Heart left ventricle (tissue), 16 donors: ENCODE measurements at regions of chr5 and their contacts with region 1.

Region 1: GRCh38 chr5:74167206-74167929 is 473.2 kb downstream of the ENC1 start:
- DNase-seq: no peak
- ATAC-seq: peak in 1 of 4 donors; percentile 66
- H3K4me3 ChIP-seq: no peak overlapping the region
- H3K27ac ChIP-seq: peak overlapping the region in 2 of 12 donors; percentile 26 to 27
- H3K4me1 ChIP-seq: peaks cover 0 to 32% (median 18%) of the 10 kb centered on the region in 12 donors
- H3K27me3 ChIP-seq: no peaks in the 10 kb centered on the region
- CTCF ChIP-seq: no peak
- POLR2A ChIP-seq: no peak

Region 2: DNA sequence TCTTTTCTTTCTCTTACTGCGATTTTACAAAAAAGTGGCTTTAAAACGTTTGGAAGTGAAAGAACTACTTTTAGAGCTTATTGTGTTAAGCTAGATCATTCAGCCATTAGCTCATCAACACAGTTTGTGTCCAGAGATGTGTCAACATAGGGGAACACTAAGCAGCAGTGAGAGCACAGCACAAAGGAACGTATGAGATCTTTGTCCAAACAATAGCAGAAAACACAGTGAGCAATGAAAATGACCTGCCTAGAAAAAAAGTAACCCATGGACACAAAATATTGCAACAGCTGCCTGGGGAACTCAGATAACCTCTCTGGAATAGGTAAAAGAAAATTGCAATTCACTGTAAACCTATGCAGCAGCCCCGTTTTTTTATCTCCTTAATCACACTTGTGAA is 168.9 kb before region 1 on chr5:
- intact Hi-C with region 1: no loop called
- DNase-seq: no peak
- ATAC-seq: peak in 1 of 4 donors; percentile 31
- H3K4me3 ChIP-seq: no peak overlapping the region
- H3K27ac ChIP-seq: no peak overlapping the region
- H3K4me1 ChIP-seq: peaks cover 0 to 3% (median 0%) of the 10 kb centered on the region in 12 donors
- H3K27me3 ChIP-seq: no peaks in the 10 kb centered on the region
- CTCF ChIP-seq: no peak
- POLR2A ChIP-seq: no peak

Region 3: DNA sequence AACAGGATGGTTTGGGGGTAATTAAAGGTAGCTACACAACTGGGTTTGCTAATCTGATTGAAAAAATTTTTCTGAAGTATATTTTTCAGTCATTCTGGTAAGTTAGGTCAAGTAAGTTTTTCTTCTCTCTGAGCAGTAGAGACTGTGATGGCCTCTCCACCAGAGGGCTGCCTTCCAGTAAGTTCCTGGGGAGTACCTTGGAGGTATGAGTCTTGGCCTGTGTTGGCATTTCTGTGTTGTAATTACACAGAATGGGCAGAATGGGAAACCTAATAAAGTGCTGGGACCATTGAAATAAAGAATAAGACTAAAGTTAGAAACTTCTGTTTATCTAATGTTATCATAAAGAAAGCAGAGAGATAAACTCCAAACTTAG is 110.6 kb before region 1 on chr5:
- intact Hi-C with region 1: loop called in 1 of 10 experiments (anchors 10 kb)
- DNase-seq: no peak
- ATAC-seq: peak in 3 of 4 donors; percentile 44 to 66 (median 49)
- H3K4me3 ChIP-seq: no peak overlapping the region
- H3K27ac ChIP-seq: peak overlapping the region in 4 of 12 donors; percentile 21 to 54 (median 44)
- H3K4me1 ChIP-seq: peaks cover 0 to 16% (median 0%) of the 10 kb centered on the region in 12 donors
- H3K27me3 ChIP-seq: no peaks in the 10 kb centered on the region
- CTCF ChIP-seq: peak in 10 of 12 donors; percentile 10 to 57 (median 35)
- POLR2A ChIP-seq: no peak

Region 4: DNA sequence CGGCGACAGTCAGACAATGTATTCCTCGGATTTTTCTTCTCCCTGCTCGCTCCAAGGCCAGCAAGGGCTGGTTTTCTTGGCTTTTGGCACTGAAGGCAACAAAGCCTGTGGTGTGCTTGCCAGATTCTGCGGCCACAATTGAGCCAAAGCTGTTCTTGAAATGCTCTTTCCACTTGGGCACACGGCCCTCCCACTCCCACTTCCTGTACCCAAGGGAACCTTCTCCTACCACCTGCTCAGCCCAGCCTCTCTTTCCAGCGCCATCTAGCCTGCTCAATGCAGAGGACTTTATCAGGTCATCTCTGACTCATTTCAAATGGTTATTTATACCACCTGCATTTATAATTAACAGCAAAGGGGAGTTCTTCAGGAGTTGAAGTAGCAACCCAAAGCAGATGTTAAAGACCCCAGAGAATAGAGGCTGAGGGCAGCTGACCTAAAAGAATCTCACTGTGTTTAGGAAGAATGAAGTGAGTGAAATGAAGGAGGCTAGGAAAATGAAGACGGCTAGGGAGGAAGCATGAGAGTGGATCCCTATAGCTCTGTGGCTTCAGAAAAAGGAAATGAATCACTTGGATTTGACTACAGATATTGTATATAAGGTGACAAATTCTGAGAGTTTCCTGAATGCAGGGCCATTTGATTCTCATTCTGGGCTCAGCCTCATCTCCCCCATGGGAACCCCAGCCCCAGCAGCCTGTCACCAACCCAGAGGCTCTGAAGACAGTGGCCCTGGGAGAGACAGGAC is 34.1 kb after region 1 on chr5:
- intact Hi-C with region 1: no loop called
- DNase-seq: peak; percentile 42 to 75 (median 58)
- ATAC-seq: peak; percentile 47 to 82 (median 74)
- H3K4me3 ChIP-seq: no peak overlapping the region
- H3K27ac ChIP-seq: peak overlapping the region in 3 of 12 donors; percentile 6 to 13 (median 8)
- H3K4me1 ChIP-seq: peaks cover 0 to 39% (median 21%) of the 10 kb centered on the region in 12 donors
- H3K27me3 ChIP-seq: no peaks in the 10 kb centered on the region
- CTCF ChIP-seq: no peak
- POLR2A ChIP-seq: no peak